Posterior vena cava (tissue), 2 donors: ENCODE measurements at regions of chr14 and their contacts with region 1.

Region 1: GRCh38 chr14:70972107-70972976 is 65.1 kb downstream of the PCNX1 start:
- DNase-seq: peak; percentile 90

Region 2: GRCh38 chr14:70821584-70822529 is 150.5 kb before region 1 on chr14:
- intact Hi-C with region 1: loop called in 1 of 2 experiments (anchors 10 kb)
- DNase-seq: peak; percentile 91

Region 3: GRCh38 chr14:70832536-70833305 is 139.6 kb before region 1 on chr14:
- intact Hi-C with region 1: loop called (anchors 10 kb)
- DNase-seq: no peak

Region 4: GRCh38 chr14:70907176-70907995 is 65.0 kb before region 1 on chr14 and contains the start of gene PCNX1:
- intact Hi-C with region 1: loop called in 1 of 2 experiments (anchors 5 kb)
- DNase-seq: peak; percentile 97
- total RNA-seq, gene PCNX1: 58.4 to 58.6 TPM

Region 5: DNA sequence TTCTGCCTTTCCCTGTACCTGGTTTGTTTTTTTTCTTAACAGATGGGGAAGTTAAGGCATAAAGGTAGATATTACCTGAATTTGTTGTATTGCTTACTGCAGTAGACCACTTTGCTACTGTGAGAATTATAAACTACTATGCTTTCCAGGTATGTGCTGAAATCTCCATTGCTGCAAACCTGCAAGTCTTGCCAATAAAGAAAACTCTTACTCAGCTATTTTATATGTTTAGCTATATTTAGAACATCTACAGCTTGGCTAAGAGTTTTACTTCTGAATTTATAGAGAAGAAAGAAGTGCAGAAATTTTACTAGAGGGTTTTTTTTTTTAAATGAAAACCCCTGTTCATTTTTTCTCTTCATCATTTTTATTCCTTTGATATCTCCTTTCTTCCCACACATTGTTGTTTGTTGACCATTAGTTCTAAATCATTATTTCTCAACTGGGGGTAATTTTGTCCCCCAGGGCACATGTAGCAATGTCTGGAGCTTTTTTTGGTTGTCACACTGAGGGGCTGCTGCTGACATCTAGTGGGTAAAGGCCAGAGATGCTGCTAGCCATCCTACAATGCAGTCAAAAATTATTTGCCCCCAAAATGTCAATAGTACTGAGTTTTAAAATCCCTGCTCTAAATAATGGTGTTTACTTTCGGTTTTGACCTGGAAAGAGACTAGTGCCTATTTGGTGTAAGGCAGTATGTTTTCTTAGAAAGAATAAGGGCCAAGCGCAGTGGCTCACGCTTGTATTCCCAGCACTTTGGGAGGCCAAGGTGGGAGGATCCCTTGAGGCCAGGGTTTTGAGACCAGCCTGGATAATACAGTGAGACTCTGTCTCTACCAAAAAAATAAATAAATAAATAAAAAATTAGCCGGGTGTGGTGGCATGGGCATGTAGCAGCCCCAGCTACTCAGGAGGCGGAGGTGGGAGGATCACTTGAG is 16.5 kb before region 1 on chr14:
- intact Hi-C with region 1: no loop called
- DNase-seq: no peak